Uterus (tissue), 4 donors: ENCODE measurements at regions of chr4 and their contacts with region 1.

Region 1: DNA sequence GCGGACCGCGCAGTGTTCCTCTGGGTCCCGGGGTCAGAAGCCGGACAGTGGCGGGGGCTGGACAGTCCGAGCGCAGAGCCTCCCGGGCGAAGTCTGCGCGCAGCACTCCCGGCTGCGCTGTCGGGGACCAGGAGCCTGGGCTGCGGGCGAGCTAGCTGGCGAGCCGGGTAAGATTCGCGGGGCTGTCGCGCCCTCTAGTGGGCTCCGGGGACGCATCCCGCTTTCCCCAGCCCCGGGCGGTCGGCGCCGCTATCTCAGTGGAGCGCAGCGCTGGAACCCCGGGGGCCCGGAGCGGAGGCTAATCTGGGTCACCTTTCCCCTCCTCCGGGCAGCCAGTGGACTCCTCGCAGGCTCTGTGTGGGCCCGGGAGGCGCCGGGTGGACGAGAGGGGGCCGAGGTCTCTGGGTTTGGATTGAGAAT is 4.2 kb downstream of the PDGFRA start:
- DNase-seq: peak; percentile 82 to 86
- H3K4me3 ChIP-seq: peak overlapping the region; percentile 49 to 59
- H3K27ac ChIP-seq: peak overlapping the region; percentile 82 to 86
- H3K4me1 ChIP-seq: peaks cover 0 to 13% of the 10 kb centered on the region in 2 donors
- H3K27me3 ChIP-seq: peaks cover 31 to 37% of the 10 kb centered on the region in 2 donors
- CTCF ChIP-seq: peak; percentile 73 to 85 (median 78)
- POLR2A ChIP-seq: peak in 1 of 2 donors; percentile 10

Region 2: GRCh38 chr4:53015681-53016080 is 1217.6 kb before region 1 on chr4:
- intact Hi-C with region 1: loop called (anchors 5 kb)
- DNase-seq: peak; percentile 51 to 54
- H3K4me3 ChIP-seq: no peak overlapping the region
- H3K27ac ChIP-seq: peak overlapping the region in 1 of 2 donors; percentile 52
- H3K4me1 ChIP-seq: peaks cover 0 to 9% of the 10 kb centered on the region in 2 donors
- H3K27me3 ChIP-seq: no peaks in the 10 kb centered on the region
- CTCF ChIP-seq: peak in 3 of 4 experiments; percentile 44 to 67 (median 53)
- POLR2A ChIP-seq: no peak

Region 3: GRCh38 chr4:53196882-53197771 is 1036.2 kb before region 1 on chr4:
- intact Hi-C with region 1: loop called (anchors 10 kb)
- DNase-seq: no peak
- H3K4me3 ChIP-seq: no peak overlapping the region
- H3K27ac ChIP-seq: peak overlapping the region in 1 of 2 donors; percentile 1
- H3K4me1 ChIP-seq: no peaks in the 10 kb centered on the region
- H3K27me3 ChIP-seq: no peaks in the 10 kb centered on the region
- CTCF ChIP-seq: peak; percentile 62 to 82 (median 70)
- POLR2A ChIP-seq: no peak

Region 4: DNA sequence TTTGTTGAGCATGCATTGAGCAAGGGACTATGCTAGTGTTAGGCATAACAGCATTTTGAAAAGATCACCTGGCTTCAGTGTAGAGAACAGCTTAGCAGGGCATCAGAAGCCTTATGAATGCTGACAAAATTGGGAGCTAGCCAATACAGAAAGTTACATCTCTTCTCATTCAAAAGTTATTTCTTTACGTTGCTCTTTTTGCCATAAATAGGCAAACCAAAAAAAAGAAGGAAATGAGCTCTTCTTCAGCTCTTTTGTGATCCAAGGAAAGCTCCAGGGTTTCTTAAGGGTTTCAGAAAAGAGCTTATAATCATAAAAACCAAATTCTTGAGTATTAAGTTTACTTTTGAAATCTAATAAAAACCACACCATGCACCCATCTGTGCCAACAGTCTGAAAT is 606.8 kb before region 1 on chr4:
- intact Hi-C with region 1: no loop called
- DNase-seq: no peak
- H3K4me3 ChIP-seq: no peak overlapping the region
- H3K27ac ChIP-seq: no peak overlapping the region
- H3K4me1 ChIP-seq: no peaks in the 10 kb centered on the region
- H3K27me3 ChIP-seq: no peaks in the 10 kb centered on the region
- CTCF ChIP-seq: no peak
- POLR2A ChIP-seq: no peak